MCF 10A (cell line): ENCODE measurements at regions of chr20 and their contacts with region 1.

Region 1: DNA sequence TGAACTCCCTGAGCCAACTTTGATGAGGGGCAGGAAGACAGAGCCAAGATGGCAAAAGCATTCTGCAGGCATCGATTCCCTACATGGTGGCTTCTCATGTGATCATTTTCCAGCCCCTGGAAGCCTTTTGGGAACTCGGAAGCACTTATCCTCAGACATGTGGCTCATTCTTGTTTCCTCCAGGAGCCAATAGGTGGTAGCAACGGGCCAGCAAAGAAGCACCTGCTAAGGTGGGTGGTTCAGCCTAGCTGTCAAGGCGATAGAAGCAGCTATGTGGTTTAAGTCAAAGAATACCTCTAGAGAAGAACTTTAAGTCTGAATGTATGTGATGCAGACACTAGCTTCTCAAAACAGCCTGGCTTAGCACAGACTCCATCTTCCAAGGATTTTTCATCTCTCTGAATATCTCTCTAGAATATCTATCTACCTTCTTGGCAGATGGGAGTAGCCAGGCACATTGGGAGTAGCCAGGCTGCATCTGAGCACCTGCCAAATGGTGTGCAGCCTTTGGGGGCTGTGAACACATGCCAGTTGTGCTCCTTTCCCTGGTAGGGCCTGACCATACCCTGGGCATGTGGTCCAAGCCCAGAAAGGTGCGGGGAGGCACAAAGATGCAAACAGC is 64.8 kb upstream of the PAX1 start:
- DNase-seq: peak; percentile 45
- H3K4me3 Mint-ChIP-seq: no peak overlapping the region
- H3K27ac Mint-ChIP-seq: no peak overlapping the region
- H3K4me1 Mint-ChIP-seq: no peaks in the 10 kb centered on the region
- H3K27me3 Mint-ChIP-seq: peaks cover 17% of the 10 kb centered on the region
- CTCF ChIP-seq: peak; percentile 37

Region 2: DNA sequence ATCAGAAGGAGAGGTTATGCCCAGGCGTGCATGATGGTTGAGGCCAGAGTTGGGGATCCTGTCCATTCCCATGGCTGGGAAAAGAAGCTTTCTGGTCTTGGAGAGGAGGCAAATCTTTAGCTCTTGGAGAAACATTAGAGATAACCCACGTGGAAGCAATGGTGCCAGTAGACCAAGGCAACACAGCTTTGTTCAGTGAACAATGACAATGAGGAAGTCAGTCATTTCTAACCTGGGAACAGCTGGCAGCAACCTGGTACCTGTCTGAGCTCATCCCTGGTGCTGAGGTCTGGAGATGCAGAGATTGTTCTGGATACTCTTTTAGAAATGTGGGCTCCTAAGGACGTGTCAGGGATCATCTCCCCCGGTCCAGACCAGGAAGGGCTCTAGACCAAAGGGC is 11.9 kb before region 1 on chr20:
- CTCF ChIA-PET with region 1: interaction called, 17 read pairs
- POLR2A ChIA-PET with region 1: no interaction called
- intact Hi-C with region 1: no loop called
- DNase-seq: no peak
- H3K4me3 Mint-ChIP-seq: no peak overlapping the region
- H3K27ac Mint-ChIP-seq: no peak overlapping the region
- H3K4me1 Mint-ChIP-seq: no peaks in the 10 kb centered on the region
- H3K27me3 Mint-ChIP-seq: peaks cover 84% of the 10 kb centered on the region
- CTCF ChIP-seq: no peak

Region 3: DNA sequence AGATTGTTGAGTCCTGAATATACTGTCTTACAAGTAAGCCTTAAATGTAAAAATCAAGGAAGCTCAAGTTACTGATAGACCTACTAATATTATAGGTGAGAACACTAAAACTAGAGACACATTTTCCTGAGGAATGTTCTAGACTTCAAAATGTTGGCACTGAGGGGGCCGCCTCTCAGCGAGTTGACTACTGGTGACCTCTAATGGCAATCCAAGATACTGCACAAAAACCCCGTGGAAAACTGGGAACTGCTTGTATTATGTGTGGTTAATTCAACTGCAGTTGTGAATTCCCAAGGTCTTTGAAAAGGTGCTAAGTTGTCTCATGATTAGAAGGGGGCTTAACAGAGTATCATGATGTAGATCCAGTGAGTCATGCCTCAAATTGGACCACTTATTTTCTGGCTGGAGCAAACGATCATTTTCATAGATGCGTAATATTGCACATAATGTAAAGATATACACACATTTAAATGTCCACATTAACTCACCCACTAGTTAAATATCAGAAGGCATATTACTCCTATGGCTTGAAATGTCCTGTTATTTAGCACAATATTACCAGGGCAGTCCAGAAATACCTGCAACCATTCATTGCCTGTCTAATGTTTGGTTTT is 607.5 kb after region 1 on chr20:
- CTCF ChIA-PET with region 1: interaction called, 7 read pairs
- POLR2A ChIA-PET with region 1: no interaction called
- intact Hi-C with region 1: loop called (anchors 5 kb)
- DNase-seq: peak; percentile 38
- H3K4me3 Mint-ChIP-seq: no peak overlapping the region
- H3K27ac Mint-ChIP-seq: no peak overlapping the region
- H3K4me1 Mint-ChIP-seq: no peaks in the 10 kb centered on the region
- H3K27me3 Mint-ChIP-seq: peaks cover 11% of the 10 kb centered on the region
- CTCF ChIP-seq: peak; percentile 52